ENCODE measurements at regions of chr2 and their contacts with region 1.

Region 1: GRCh38 chr2:9142551-9143263 is 63.9 kb upstream of the ASAP2 start:
- DNase-seq: peak; percentile 92
- ATAC-seq: peak; percentile 93
- H3K4me3 ChIP-seq: peak overlapping the region; percentile 4; the same call in 1 of the 2 replicates
- H3K27ac ChIP-seq: peak overlapping the region; percentile 51
- H3K4me1 ChIP-seq: peaks cover 21% of the 10 kb centered on the region
- H3K27me3 ChIP-seq: no peaks in the 10 kb centered on the region
- CTCF ChIP-seq: peak; percentile 98
- POLR2A ChIP-seq: peak; percentile 55; the same call in 1 of the 2 replicates
- RAD21 ChIP-seq: peak; percentile 100

Region 2: DNA sequence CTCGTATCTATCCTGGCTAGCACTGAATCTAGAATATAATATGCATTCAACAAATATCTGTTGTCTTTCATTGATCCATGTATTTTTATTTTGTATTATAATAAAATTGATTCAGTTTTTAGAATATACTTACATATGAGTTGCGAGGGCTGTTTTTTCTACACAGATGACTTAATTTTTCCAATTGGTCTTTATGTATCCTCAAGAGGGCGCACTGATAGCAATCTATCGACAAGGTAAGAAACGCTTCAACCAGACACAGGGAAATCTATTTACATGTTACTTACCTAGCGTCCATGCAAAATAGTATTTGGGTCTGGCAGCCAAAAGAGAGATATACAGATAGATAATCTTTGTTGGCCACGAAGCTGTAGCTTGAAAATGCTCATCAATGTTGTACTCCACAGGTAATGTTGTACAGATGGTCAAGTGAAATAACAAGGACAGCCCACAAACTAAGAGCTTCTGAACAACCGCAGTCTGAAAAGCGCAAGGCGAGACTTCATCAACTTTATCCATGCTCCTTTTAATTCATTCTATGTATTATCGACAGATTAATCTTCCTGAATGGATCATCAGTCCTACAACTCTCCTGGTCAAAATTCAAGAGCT is 269.8 kb before region 1 on chr2:
- CTCF ChIA-PET with region 1: interaction called, 3 read pairs
- POLR2A ChIA-PET with region 1: no interaction called
- dilution Hi-C with region 1: no loop called
- in situ Hi-C with region 1: loop called (anchors 5 kb)
- intact Hi-C with region 1: loop called (anchors 1 kb)
- DNase-seq: peak; percentile 73
- ATAC-seq: peak; percentile 54
- H3K4me3 ChIP-seq: no peak overlapping the region
- H3K27ac ChIP-seq: no peak overlapping the region
- H3K4me1 ChIP-seq: peaks cover 2% of the 10 kb centered on the region; the same call in 1 of the 2 replicates
- H3K27me3 ChIP-seq: no peaks in the 10 kb centered on the region
- CTCF ChIP-seq: peak; percentile 71
- POLR2A ChIP-seq: no peak
- RAD21 ChIP-seq: peak; percentile 74

Region 3: GRCh38 chr2:9092383-9093282 is 50.1 kb before region 1 on chr2:
- CTCF ChIA-PET with region 1: no interaction called
- POLR2A ChIA-PET with region 1: interaction called, 11 read pairs
- dilution Hi-C with region 1: no loop called
- in situ Hi-C with region 1: no loop called
- intact Hi-C with region 1: no loop called
- DNase-seq: no peak
- ATAC-seq: no peak
- H3K4me3 ChIP-seq: no peak overlapping the region
- H3K27ac ChIP-seq: no peak overlapping the region; the same call in 1 of the 2 replicates
- H3K4me1 ChIP-seq: peaks cover 10% of the 10 kb centered on the region
- H3K27me3 ChIP-seq: no peaks in the 10 kb centered on the region
- CTCF ChIP-seq: no peak
- POLR2A ChIP-seq: no peak
- RAD21 ChIP-seq: no peak

Region 4: DNA sequence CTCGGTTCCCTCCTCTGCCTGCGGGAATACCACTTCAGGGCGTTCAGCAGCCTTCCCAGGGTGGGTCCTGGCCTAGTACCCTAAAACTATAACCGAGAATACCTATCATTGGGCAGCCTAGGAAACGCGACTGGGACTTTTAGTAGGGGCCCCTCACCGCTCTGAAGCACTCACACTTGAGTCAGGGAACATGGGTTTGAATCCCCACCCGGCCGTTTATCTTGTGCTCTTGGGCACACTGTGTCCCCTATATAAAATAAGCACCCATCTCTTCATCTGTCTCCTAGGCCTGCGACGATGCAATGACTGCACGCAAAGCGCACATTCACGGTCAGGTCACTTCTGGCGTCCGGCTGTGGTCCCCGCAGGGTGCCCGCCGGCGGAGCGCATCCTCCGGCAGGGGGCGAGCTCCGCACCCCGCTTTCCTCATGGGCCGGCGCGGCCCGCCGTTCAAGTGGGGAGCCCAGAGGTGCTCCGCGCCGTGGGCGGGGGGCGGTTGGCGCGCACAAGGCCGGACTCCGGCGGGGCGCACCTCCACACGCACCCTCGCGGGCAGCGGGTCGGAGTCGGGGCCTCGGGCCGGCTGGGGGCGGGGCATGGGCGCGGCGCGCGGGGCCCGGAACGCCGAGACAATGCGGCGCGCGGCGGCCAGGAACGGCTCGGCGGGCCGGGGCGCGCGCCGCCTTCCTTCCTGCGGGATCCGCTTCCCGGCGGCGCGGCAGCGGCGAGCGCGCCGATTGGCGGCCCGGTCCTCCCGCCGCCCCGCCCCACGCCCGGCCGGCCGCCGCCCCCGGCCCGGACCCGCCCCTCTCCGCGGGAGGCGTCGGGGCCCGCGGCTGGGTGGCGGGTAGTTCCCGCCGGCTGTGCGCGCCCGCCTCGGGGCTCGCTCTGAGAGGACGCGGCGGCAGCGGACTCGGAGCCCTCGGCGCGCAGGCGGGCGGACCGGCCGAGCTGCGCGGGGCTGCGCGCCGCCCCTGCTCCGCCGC is 63.5 kb after region 1 on chr2 and contains the start of gene ASAP2:
- CTCF ChIA-PET with region 1: no interaction called
- POLR2A ChIA-PET with region 1: interaction called, 3 read pairs
- dilution Hi-C with region 1: no loop called
- in situ Hi-C with region 1: no loop called
- intact Hi-C with region 1: loop called (anchors 1 kb)
- DNase-seq: peak; percentile 68
- ATAC-seq: peak; percentile 88
- H3K4me3 ChIP-seq: peak within 1 kb of the TSS; percentile 96
- H3K27ac ChIP-seq: peak within 1 kb of the TSS; percentile 80
- H3K4me1 ChIP-seq: peaks cover 6% of the 10 kb centered on the region
- H3K27me3 ChIP-seq: no peaks in the 10 kb centered on the region
- CTCF ChIP-seq: peak; percentile 77
- POLR2A ChIP-seq: peak; percentile 73; the same call in 1 of the 2 replicates
- RAD21 ChIP-seq: peak; percentile 69
- total RNA-seq, gene ASAP2: 19.7 and 26.9 TPM in 2 replicates

Region 5: GRCh38 chr2:9333591-9334171 is 191.0 kb after region 1 on chr2:
- CTCF ChIA-PET with region 1: interaction called, 12 read pairs
- POLR2A ChIA-PET with region 1: no interaction called
- dilution Hi-C with region 1: no loop called
- in situ Hi-C with region 1: loop called (anchors 10 kb)
- intact Hi-C with region 1: loop called (anchors 1 kb)
- DNase-seq: peak; percentile 91
- ATAC-seq: peak; percentile 72
- H3K4me3 ChIP-seq: no peak overlapping the region
- H3K27ac ChIP-seq: no peak overlapping the region
- H3K4me1 ChIP-seq: peaks cover 10% of the 10 kb centered on the region
- H3K27me3 ChIP-seq: no peaks in the 10 kb centered on the region
- CTCF ChIP-seq: peak; percentile 85
- POLR2A ChIP-seq: no peak
- RAD21 ChIP-seq: peak; percentile 89

Region 6: GRCh38 chr2:9378433-9379390 is 236.0 kb after region 1 on chr2:
- CTCF ChIA-PET with region 1: interaction called, 3 read pairs
- POLR2A ChIA-PET with region 1: no interaction called
- dilution Hi-C with region 1: no loop called
- in situ Hi-C with region 1: loop called (anchors 10 kb)
- intact Hi-C with region 1: no loop called
- DNase-seq: peak; percentile 90
- ATAC-seq: peak; percentile 88
- H3K4me3 ChIP-seq: no peak overlapping the region
- H3K27ac ChIP-seq: peak overlapping the region; percentile 85
- H3K4me1 ChIP-seq: peaks cover 31% of the 10 kb centered on the region
- H3K27me3 ChIP-seq: no peaks in the 10 kb centered on the region
- CTCF ChIP-seq: 0 out of 2 replicates have a peak, but pooled peaks have one; percentile 15
- POLR2A ChIP-seq: no peak
- RAD21 ChIP-seq: peak; percentile 32; the same call in 1 of the 2 replicates

Region 7: DNA sequence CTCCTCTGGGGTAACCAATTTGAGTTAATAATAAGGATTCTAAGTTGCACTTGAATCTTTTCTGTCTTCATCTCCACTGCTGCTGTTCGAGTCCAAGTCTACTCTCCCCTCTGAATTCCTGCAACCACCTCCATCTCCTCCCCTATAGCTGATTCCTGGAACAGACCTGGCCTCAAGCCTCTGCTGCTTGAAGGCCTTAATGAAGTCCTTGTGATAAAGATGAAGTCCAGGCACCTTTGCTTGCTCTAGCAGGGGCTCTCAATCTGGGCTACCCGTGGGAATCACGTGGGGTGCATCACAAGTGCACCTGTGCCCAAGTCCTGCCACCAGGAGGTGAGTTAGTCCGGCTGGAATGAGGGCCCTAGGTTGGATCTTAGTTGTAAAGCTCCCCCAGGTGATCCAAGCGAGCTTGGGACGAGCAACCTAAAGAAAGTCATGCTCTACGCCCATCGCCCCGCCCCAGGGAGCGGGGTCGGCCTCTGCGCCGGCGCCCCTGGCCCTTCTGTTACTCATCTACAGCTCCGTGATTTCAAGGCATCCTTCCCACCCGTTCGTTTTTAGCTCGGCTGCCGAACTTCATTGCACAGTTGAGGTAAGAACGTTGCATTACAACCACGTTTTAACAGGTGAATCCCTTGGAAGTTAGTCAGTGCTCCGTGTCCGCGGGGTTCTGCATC is 330.7 kb after region 1 on chr2:
- CTCF ChIA-PET with region 1: no interaction called
- POLR2A ChIA-PET with region 1: no interaction called
- dilution Hi-C with region 1: no loop called
- in situ Hi-C with region 1: no loop called
- intact Hi-C with region 1: loop called (anchors 5 kb)
- DNase-seq: no peak
- ATAC-seq: no peak
- H3K4me3 ChIP-seq: no peak overlapping the region
- H3K27ac ChIP-seq: no peak overlapping the region
- H3K4me1 ChIP-seq: peaks cover 12% of the 10 kb centered on the region
- H3K27me3 ChIP-seq: no peaks in the 10 kb centered on the region
- CTCF ChIP-seq: no peak
- POLR2A ChIP-seq: no peak
- RAD21 ChIP-seq: no peak

Region 8: GRCh38 chr2:10557506-10558265 is 1415.0 kb after region 1 on chr2:
- CTCF ChIA-PET with region 1: no interaction called
- POLR2A ChIA-PET with region 1: no interaction called
- dilution Hi-C with region 1: no loop called
- in situ Hi-C with region 1: no loop called
- intact Hi-C with region 1: no loop called
- DNase-seq: no peak
- ATAC-seq: no peak
- H3K4me3 ChIP-seq: no peak overlapping the region
- H3K27ac ChIP-seq: no peak overlapping the region
- H3K4me1 ChIP-seq: no peaks in the 10 kb centered on the region
- H3K27me3 ChIP-seq: no peaks in the 10 kb centered on the region
- CTCF ChIP-seq: no peak
- POLR2A ChIP-seq: no peak
- RAD21 ChIP-seq: no peak